ENCODE measurements at regions of chr13 and their contacts with region 1.

Region 1: DNA sequence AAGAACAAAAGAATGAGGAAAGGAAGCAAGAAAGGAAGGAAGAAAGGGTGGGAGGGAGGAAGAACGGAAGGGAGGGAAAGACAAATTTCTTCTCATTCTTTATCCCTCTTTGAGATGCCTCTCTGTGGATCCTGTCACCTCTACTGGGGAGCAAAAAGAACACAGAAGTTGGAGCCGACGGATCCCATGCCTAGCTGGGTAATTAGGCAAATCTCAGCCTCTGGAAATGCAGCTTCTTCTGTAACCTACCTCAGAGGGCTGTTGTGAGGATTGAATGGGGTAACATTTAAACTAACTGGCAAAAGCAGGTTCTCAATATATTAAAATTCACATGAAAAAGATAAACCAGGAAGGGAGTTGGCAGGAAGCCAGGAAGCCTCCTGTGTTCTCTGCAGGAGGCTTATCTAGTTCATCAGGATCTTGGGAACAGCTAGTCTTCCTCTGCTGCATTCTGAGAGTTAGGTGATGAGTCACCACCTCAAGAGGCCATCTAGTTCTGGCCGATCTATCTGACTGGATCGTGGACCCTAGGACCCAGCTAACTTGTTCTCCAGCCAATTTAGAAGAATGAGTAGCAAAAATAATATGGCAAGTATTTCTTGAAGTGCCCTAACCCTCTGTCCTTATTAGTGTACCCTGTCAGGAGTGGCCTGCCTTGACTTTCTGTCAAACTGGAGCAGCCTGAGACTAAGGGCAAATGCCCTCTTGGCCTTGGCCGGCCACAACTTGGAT is 15.2 kb upstream of the CPB2 start:
- DNase-seq: peak in 1 of 5 donors; percentile 28
- ATAC-seq: peak in 2 of 4 donors; percentile 31 to 83
- H3K4me3 ChIP-seq: no peak overlapping the region
- H3K27ac ChIP-seq: no peak overlapping the region
- H3K4me1 ChIP-seq: peaks cover 0 to 9% (median 0%) of the 10 kb centered on the region in 12 donors
- H3K27me3 ChIP-seq: no peaks in the 10 kb centered on the region
- CTCF ChIP-seq: no peak
- POLR2A ChIP-seq: no peak

Region 2: GRCh38 chr13:46052319-46053161 is 67.5 kb before region 1 on chr13 and contains the start of gene ZC3H13:
- intact Hi-C with region 1: loop called in 1 of 10 experiments (anchors 5 kb)
- DNase-seq: peak; percentile 93 to 96 (median 94)
- ATAC-seq: peak; percentile 99 to 100 (median 100)
- H3K4me3 ChIP-seq: peak within 1 kb of the TSS; percentile 71 to 98 (median 86)
- H3K27ac ChIP-seq: peak within 1 kb of the TSS; percentile 56 to 96 (median 92)
- H3K4me1 ChIP-seq: peaks cover 0 to 34% (median 26%) of the 10 kb centered on the region in 12 donors
- H3K27me3 ChIP-seq: no peaks in the 10 kb centered on the region
- CTCF ChIP-seq: peak in 11 of 12 donors; percentile 15 to 50 (median 43)
- POLR2A ChIP-seq: peak in 1 of 2 donors; percentile 57
- total RNA-seq, gene ZC3H13: 19.4 to 53.3 (median 38.8) TPM